CD8-positive, alpha-beta T cell (primary cell): ENCODE measurements at regions of chr5 and their contacts with region 1.

Region 1: DNA sequence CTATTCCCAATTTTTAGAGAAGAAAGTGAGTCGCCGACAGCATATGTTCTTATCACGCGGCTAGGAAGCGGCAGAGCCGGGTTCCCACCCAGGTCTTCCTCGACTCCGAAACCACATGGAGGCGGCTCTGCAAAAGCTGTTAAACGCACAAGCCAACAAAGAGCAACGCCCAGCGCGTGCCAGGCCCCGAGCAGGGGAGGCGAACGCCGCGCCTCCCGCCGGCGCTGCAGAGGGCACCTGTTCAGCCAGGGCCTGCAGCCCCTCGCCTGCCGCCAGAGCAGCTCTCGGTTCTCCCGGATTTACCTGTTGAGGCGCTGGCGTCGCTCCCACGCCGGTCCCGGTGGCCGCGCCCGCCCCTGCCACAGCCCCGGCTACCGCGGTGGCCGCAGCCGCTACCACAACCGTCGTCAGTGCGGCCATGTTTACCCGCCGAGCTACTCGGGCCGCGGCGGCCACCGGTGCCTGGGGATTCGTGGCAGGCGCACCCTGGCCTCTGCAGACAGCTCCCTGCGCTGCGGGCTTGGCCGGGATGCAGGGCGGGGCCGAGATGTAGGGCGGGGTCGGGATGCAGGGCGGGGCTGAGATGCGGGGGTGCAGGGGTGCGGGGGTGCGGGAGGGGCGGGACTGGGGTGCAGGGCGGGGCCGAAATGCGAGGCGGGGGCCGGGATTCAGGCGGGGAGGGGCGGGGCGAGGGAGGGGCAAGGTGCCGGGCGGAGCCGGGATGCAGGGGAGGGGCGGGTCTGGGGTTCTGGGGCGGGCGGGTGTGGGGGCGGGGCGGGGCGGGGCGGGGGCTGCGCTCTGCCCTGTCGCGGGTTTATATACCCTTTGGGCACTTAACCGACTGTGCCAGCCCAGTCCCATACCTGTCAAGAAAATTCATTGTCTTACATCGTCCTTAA is at the start of gene CCDC112:
- DNase-seq: peak; percentile 45 to 85 (median 70)
- ATAC-seq: peak; percentile 76
- H3K4me3 ChIP-seq: peak within 1 kb of the TSS; percentile 58 to 65
- H3K4me3 Mint-ChIP-seq: peak within 1 kb of the TSS; percentile 78
- H3K27ac ChIP-seq: no peak within 1 kb of the TSS
- H3K27ac Mint-ChIP-seq: no peak within 1 kb of the TSS
- H3K4me1 ChIP-seq: peaks cover 4% of the 10 kb centered on the region
- H3K4me1 Mint-ChIP-seq: peaks cover 12% of the 10 kb centered on the region
- H3K27me3 ChIP-seq: no peaks in the 10 kb centered on the region
- H3K27me3 Mint-ChIP-seq: no peaks in the 10 kb centered on the region
- CTCF ChIP-seq: no peak
- total RNA-seq, gene CCDC112: 1.6 to 2.7 TPM

Region 2: DNA sequence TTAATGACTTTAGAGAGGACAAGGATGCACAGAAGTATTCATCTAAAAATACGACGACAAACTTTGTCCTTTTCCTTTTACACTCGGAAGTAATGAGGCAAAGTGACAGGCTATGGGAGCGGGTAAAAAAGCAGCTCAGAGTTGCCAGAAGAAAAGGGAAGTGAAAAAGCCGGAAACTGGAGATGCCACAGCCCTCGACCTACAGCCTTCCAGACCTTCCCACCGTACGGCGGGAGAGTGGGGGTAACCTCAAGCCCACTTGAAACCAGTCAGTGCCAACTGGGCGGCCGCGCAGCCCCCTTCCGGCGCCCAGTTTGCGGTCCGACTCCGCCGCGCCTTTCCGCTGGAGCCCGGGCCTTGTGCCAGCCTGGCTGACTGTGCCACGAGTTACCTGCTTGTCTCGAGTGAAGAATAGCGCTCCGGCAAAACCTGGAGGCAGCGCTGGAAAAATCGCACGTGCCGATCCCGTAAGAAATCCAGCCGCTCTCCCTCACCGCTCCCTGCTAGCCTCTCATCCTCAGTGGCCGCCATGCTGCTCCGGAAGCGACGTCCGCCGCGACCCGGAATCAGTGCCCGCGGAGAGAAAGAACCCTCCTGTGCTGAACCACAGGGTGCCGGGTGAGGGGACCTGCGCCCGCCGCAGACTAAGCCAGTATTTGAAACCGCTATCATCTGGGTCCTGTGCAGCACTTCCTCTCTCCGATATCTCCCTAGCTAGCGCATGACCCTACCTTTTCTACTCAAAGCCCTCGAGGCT is 33.9 kb before region 1 on chr5 and contains the start of gene PGGT1B:
- CTCF ChIA-PET with region 1: interaction called, 3 read pairs
- POLR2A ChIA-PET with region 1: interaction called, 3 read pairs
- intact Hi-C with region 1: loop called in 1 of 2 experiments (anchors 1 kb)
- DNase-seq: peak; percentile 37 to 83 (median 72)
- ATAC-seq: peak; percentile 94
- H3K4me3 ChIP-seq: peak within 1 kb of the TSS; percentile 82 to 97
- H3K4me3 Mint-ChIP-seq: peak within 1 kb of the TSS; percentile 94
- H3K27ac ChIP-seq: peak within 1 kb of the TSS; percentile 62 to 91
- H3K27ac Mint-ChIP-seq: peak within 1 kb of the TSS; percentile 98
- H3K4me1 ChIP-seq: peaks cover 28% of the 10 kb centered on the region
- H3K4me1 Mint-ChIP-seq: peaks cover 49% of the 10 kb centered on the region
- H3K27me3 ChIP-seq: no peaks in the 10 kb centered on the region
- H3K27me3 Mint-ChIP-seq: no peaks in the 10 kb centered on the region
- CTCF ChIP-seq: no peak
- total RNA-seq, gene PGGT1B: 55.2 to 57.0 TPM

Region 3: GRCh38 chr5:115333164-115333563 is 36.8 kb after region 1 on chr5:
- CTCF ChIA-PET with region 1: no interaction called
- POLR2A ChIA-PET with region 1: no interaction called
- intact Hi-C with region 1: no loop called
- DNase-seq: peak in 2 of 9 experiments; percentile 18 to 19
- ATAC-seq: no peak
- H3K4me3 ChIP-seq: no peak overlapping the region
- H3K4me3 Mint-ChIP-seq: no peak overlapping the region
- H3K27ac ChIP-seq: no peak overlapping the region
- H3K27ac Mint-ChIP-seq: no peak overlapping the region
- H3K4me1 ChIP-seq: no peaks in the 10 kb centered on the region
- H3K4me1 Mint-ChIP-seq: no peaks in the 10 kb centered on the region
- H3K27me3 ChIP-seq: no peaks in the 10 kb centered on the region
- H3K27me3 Mint-ChIP-seq: peaks cover 12% of the 10 kb centered on the region
- CTCF ChIP-seq: no peak

Region 4: GRCh38 chr5:116084871-116085715 is 788.7 kb after region 1 on chr5 and contains the start of gene COMMD10:
- CTCF ChIA-PET with region 1: no interaction called
- POLR2A ChIA-PET with region 1: interaction called, 3 read pairs
- intact Hi-C with region 1: loop called (anchors 5 kb)
- DNase-seq: peak; percentile 67 to 97 (median 85)
- ATAC-seq: peak; percentile 93
- H3K4me3 ChIP-seq: peak within 1 kb of the TSS; percentile 45 to 71
- H3K4me3 Mint-ChIP-seq: peak within 1 kb of the TSS; percentile 91
- H3K27ac ChIP-seq: peak within 1 kb of the TSS; percentile 87 to 96
- H3K27ac Mint-ChIP-seq: peak within 1 kb of the TSS; percentile 96
- H3K4me1 ChIP-seq: peaks cover 18% of the 10 kb centered on the region
- H3K4me1 Mint-ChIP-seq: peaks cover 62% of the 10 kb centered on the region
- H3K27me3 ChIP-seq: no peaks in the 10 kb centered on the region
- H3K27me3 Mint-ChIP-seq: no peaks in the 10 kb centered on the region
- CTCF ChIP-seq: no peak
- total RNA-seq, gene COMMD10: 18.0 to 18.8 TPM